CD8-positive, alpha-beta T cell (primary cell): ENCODE measurements at regions of chr5 and their contacts with region 1.

Region 1: GRCh38 chr5:80672140-80672736 is 17.5 kb upstream of the DHFR start:
- DNase-seq: peak in 8 of 9 experiments; percentile 38 to 75 (median 66)
- ATAC-seq: peak; percentile 84
- H3K4me3 ChIP-seq: no peak overlapping the region
- H3K4me3 Mint-ChIP-seq: no peak overlapping the region
- H3K27ac ChIP-seq: no peak overlapping the region
- H3K27ac Mint-ChIP-seq: no peak overlapping the region
- H3K4me1 ChIP-seq: no peaks in the 10 kb centered on the region
- H3K4me1 Mint-ChIP-seq: peaks cover 4% of the 10 kb centered on the region
- H3K27me3 ChIP-seq: no peaks in the 10 kb centered on the region
- H3K27me3 Mint-ChIP-seq: no peaks in the 10 kb centered on the region
- CTCF ChIP-seq: peak; percentile 88

Region 2: GRCh38 chr5:79318935-79319614 is 1353.2 kb before region 1 on chr5:
- CTCF ChIA-PET with region 1: no interaction called
- POLR2A ChIA-PET with region 1: no interaction called
- intact Hi-C with region 1: no loop called
- DNase-seq: no peak
- ATAC-seq: peak; percentile 27
- H3K4me3 ChIP-seq: no peak overlapping the region
- H3K4me3 Mint-ChIP-seq: no peak overlapping the region
- H3K27ac ChIP-seq: no peak overlapping the region
- H3K27ac Mint-ChIP-seq: no peak overlapping the region
- H3K4me1 ChIP-seq: no peaks in the 10 kb centered on the region
- H3K4me1 Mint-ChIP-seq: no peaks in the 10 kb centered on the region
- H3K27me3 ChIP-seq: no peaks in the 10 kb centered on the region
- H3K27me3 Mint-ChIP-seq: no peaks in the 10 kb centered on the region
- CTCF ChIP-seq: no peak

Region 3: GRCh38 chr5:80346055-80346454 is 326.2 kb before region 1 on chr5:
- CTCF ChIA-PET with region 1: interaction called, 10 read pairs
- POLR2A ChIA-PET with region 1: no interaction called
- intact Hi-C with region 1: loop called (anchors 2 kb)
- DNase-seq: peak in 8 of 9 experiments; percentile 3 to 56 (median 22)
- ATAC-seq: peak; percentile 57
- H3K4me3 ChIP-seq: no peak overlapping the region
- H3K4me3 Mint-ChIP-seq: no peak overlapping the region
- H3K27ac ChIP-seq: no peak overlapping the region
- H3K27ac Mint-ChIP-seq: no peak overlapping the region
- H3K4me1 ChIP-seq: no peaks in the 10 kb centered on the region
- H3K4me1 Mint-ChIP-seq: peaks cover 4% of the 10 kb centered on the region
- H3K27me3 ChIP-seq: no peaks in the 10 kb centered on the region
- H3K27me3 Mint-ChIP-seq: peaks cover 8% of the 10 kb centered on the region
- CTCF ChIP-seq: no peak

Region 4: GRCh38 chr5:80481019-80481893 is 191.0 kb before region 1 on chr5:
- CTCF ChIA-PET with region 1: interaction called, 6 read pairs
- POLR2A ChIA-PET with region 1: no interaction called
- intact Hi-C with region 1: loop called in 1 of 2 experiments (anchors 5 kb)
- DNase-seq: peak in 5 of 9 experiments; percentile 7 to 47 (median 29)
- ATAC-seq: peak; percentile 34
- H3K4me3 ChIP-seq: no peak overlapping the region
- H3K4me3 Mint-ChIP-seq: no peak overlapping the region
- H3K27ac ChIP-seq: no peak overlapping the region
- H3K27ac Mint-ChIP-seq: no peak overlapping the region
- H3K4me1 ChIP-seq: no peaks in the 10 kb centered on the region
- H3K4me1 Mint-ChIP-seq: no peaks in the 10 kb centered on the region
- H3K27me3 ChIP-seq: no peaks in the 10 kb centered on the region
- H3K27me3 Mint-ChIP-seq: peaks cover 4% of the 10 kb centered on the region
- CTCF ChIP-seq: no peak